ENCODE measurements at regions of chr20 and their contacts with region 1.

Region 1: GRCh38 chr20:44310664-44311639 is at the start of gene FITM2:
- DNase-seq: peak; percentile 99
- ATAC-seq: peak; percentile 88 to 96 (median 92)
- H3K4me3 ChIP-seq: peak within 1 kb of the TSS; percentile 57 to 97 (median 79)
- H3K27ac ChIP-seq: peak within 1 kb of the TSS; percentile 79 to 92 (median 86)
- H3K4me1 ChIP-seq: peaks cover 0 to 44% (median 20%) of the 10 kb centered on the region in 9 donors
- H3K27me3 ChIP-seq: no peaks in the 10 kb centered on the region
- CTCF ChIP-seq: peak; percentile 92 to 99 (median 97)
- total RNA-seq, gene FITM2: 94.4 to 182 (median 140) TPM

Region 2: GRCh38 chr20:44109951-44110361 is 201.0 kb before region 1 on chr20:
- intact Hi-C with region 1: loop called in 1 of 10 experiments (anchors 10 kb)
- DNase-seq: no peak
- ATAC-seq: peak in 5 of 8 donors; percentile 3 to 20 (median 12)
- H3K4me3 ChIP-seq: no peak overlapping the region
- H3K27ac ChIP-seq: no peak overlapping the region
- H3K4me1 ChIP-seq: peaks cover 0 to 44% (median 0%) of the 10 kb centered on the region in 9 donors
- H3K27me3 ChIP-seq: peaks cover 0 to 12% (median 0%) of the 10 kb centered on the region in 7 donors
- CTCF ChIP-seq: peak in 7 of 9 donors; percentile 7 to 38 (median 22)

Region 3: DNA sequence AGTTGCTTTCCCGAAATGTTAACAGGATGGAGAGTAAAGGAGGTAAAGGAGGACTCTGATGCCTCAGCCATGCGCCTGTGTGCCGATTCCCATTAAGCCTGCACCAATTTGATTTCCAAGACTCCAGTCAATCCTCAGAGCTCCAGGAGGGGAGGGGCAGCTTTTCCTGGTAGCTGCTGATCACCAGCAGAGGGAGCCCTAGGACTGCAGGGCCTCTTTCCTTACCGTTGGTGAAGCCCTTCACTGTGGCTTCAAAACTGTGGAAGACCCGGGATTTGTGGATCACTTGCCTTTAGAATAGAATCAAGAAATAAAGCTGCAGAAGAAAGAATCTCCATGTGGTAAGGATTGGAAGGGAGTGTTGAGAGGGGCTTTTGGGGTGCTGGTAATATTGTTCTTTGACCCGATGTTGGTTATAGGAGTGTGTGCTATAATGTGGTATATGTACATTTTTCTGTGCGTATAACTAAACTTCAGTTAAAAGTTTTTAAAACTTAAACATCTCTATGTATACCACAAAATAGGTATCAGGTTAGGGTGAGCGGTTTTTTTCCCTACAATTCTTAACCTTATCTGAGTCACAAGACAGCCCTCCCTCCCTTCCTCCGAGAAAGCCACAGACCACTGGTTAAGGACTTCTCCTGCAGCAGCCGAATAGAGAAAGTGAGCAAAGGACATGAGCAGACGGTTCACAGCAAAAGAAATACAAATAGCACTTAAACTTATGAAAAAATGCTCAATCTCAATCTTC is 93.4 kb before region 1 on chr20:
- intact Hi-C with region 1: loop called (anchors 1 to 5 kb)
- DNase-seq: peak; percentile 52 to 69
- ATAC-seq: peak; percentile 66 to 84 (median 78)
- H3K4me3 ChIP-seq: peak overlapping the region in 8 of 10 donors; percentile 2 to 43 (median 27)
- H3K27ac ChIP-seq: peak overlapping the region in 8 of 10 donors; percentile 1 to 72 (median 48)
- H3K4me1 ChIP-seq: peaks cover 0 to 35% (median 18%) of the 10 kb centered on the region in 9 donors
- H3K27me3 ChIP-seq: no peaks in the 10 kb centered on the region
- CTCF ChIP-seq: peak; percentile 63 to 95 (median 84)

Region 4: DNA sequence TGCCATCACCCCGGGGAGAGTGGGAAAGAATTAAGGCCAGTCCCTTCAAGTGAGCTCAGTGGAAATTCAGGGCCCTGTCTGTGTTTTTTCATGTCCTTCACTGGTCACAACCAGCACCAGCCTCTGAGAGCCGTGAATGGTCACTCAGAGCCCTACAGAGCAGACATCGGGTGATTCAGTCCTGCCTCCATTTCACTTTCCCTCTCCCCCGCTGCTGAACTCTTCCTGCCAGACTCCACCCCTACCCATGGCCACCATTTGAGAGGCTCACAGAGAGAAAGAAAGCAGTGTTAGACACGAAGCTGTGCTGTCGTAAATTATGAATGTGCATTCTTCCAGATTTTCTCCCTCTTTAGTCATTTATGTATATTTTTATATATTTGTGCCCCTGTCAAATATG is 31.3 kb after region 1 on chr20:
- intact Hi-C with region 1: no loop called
- DNase-seq: no peak
- ATAC-seq: peak in 3 of 8 donors; percentile 19 to 55 (median 48)
- H3K4me3 ChIP-seq: no peak overlapping the region
- H3K27ac ChIP-seq: no peak overlapping the region
- H3K4me1 ChIP-seq: no peaks in the 10 kb centered on the region
- H3K27me3 ChIP-seq: peaks cover 0 to 11% (median under 1%) of the 10 kb centered on the region in 7 donors
- CTCF ChIP-seq: no peak

Region 5: DNA sequence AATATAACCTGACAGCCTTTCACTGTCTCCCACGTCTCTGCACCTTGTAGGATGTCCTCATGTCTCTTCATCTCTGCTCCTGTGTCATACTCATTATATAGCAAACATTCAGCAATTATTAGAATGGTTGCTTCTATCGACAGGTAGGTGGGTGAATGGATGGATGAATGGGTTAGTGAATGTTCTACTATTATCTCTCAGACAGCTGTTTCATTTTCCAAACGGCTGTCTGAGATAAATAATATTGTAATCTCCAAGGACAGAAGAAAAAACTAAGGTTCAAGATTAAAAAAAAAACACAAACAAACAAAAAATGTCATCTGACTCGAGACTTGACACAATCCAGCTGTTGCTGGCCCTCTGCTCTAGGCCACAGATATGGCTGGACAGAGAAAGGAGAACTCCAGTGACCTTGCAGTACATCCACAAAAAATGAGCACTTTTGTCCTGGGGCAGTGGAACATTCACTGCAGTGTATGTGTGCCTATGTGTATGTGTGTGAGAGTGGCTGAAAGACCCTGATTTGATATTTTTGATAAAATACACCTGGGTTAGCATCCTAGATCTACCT is 46.7 kb after region 1 on chr20:
- intact Hi-C with region 1: no loop called
- DNase-seq: peak in 1 of 2 donors; percentile 48
- ATAC-seq: peak in 7 of 8 donors; percentile 28 to 89 (median 78)
- H3K4me3 ChIP-seq: no peak overlapping the region
- H3K27ac ChIP-seq: peak overlapping the region in 1 of 10 donors; percentile 14
- H3K4me1 ChIP-seq: peaks cover 0 to 12% (median 0%) of the 10 kb centered on the region in 9 donors
- H3K27me3 ChIP-seq: peaks cover 0 to 23% (median 0%) of the 10 kb centered on the region in 7 donors
- CTCF ChIP-seq: no peak

Region 6: DNA sequence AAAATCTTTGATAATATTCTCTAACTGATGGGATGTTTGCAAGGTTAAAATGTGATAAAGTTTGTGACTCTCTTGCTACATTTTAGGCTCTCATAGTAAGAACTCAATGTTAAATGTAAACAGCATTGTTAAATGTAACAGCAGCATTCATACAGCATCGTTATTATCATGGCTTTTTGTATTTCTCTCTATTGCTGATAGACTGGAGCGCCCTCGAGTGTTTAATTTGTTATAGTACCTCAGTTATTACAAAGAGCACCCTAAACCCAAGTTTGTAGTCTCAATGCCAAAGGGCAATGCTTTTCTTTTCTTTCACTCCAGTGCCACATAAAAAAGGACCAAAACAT is 149.8 kb after region 1 on chr20:
- intact Hi-C with region 1: loop called in 1 of 10 experiments (anchors 10 kb)
- DNase-seq: no peak
- ATAC-seq: peak in 1 of 8 donors; percentile 42
- H3K4me3 ChIP-seq: no peak overlapping the region
- H3K27ac ChIP-seq: no peak overlapping the region
- H3K4me1 ChIP-seq: no peaks in the 10 kb centered on the region
- H3K27me3 ChIP-seq: no peaks in the 10 kb centered on the region
- CTCF ChIP-seq: peak in 8 of 9 donors; percentile 7 to 60 (median 42)

Region 7: DNA sequence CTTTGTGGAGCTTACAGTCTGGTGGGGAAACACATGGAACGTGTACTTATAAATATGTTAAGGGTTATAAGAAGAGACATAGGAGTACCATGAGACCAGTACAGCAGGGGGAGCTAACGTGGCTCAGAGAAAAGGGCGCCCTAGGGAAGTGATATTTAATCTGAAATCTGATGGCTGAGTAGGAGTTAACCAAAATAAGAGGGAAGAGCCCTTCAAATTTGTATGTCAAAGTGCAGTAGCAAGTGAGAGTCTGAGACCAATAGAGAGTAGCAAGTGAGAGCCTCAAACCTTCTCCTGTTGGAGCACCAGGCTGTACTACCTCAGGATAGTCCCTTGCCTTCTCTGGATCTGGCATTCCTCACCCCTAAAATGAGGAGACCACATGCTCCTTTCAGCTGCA is 265.3 kb after region 1 on chr20:
- intact Hi-C with region 1: no loop called
- DNase-seq: peak in 1 of 2 donors; percentile 52
- ATAC-seq: peak in 5 of 8 donors; percentile 11 to 47 (median 39)
- H3K4me3 ChIP-seq: no peak overlapping the region
- H3K27ac ChIP-seq: peak overlapping the region; percentile 43 to 98 (median 64)
- H3K4me1 ChIP-seq: peaks cover 10 to 90% (median 67%) of the 10 kb centered on the region in 9 donors
- H3K27me3 ChIP-seq: no peaks in the 10 kb centered on the region
- CTCF ChIP-seq: peak; percentile 13 to 71 (median 53)

Region 8: DNA sequence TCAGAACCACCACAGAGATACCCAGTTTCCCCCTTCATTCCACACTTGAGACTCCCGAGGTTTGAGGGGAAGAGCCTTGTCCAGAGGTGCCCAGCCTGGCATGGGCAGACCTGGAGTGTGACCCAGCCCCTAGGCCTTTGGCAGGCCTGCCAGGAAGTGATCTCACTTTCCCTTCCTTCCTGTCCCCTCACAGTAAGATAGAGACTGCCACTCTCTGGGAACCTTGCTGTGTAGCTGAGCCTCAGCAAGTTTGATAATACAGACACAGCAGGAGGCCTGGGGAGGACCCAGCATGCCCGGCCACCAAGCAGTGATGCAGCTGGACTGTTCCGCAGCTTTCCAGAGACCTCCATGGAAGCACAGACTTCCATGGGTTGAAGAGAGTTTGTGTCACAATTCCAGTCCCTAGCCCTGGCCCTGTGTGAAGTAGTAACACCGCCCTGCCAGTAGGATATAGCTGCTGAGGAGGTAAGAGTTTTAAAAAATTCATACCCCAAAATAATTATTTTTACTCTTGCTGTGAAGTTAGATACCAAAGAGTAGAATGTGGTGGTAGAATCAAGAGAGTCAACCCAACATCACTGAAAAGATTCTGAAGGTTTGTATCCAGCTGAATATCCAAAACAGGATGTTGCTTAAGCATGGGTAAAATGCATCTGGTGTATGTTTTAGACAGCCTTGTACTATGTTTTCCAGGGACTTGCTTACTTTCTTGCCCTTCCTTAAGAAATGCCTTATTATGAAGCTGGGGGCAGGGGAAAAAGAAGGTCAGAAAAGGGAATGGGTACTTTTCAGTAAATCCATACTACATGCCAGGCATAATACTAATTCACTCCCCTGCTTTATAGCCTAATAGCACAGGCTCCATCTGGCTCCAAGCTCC is 287.7 kb after region 1 on chr20:
- intact Hi-C with region 1: loop called in 1 of 10 experiments (anchors 5 kb)
- DNase-seq: peak; percentile 64 to 83
- ATAC-seq: peak; percentile 59 to 77 (median 71)
- H3K4me3 ChIP-seq: peak overlapping the region in 8 of 10 donors; percentile 12 to 49 (median 36)
- H3K27ac ChIP-seq: peak overlapping the region; percentile 55 to 98 (median 92)
- H3K4me1 ChIP-seq: peaks cover 45 to 100% (median 99%) of the 10 kb centered on the region in 9 donors
- H3K27me3 ChIP-seq: no peaks in the 10 kb centered on the region
- CTCF ChIP-seq: peak in 4 of 9 donors; percentile 21 to 38 (median 30)

Measured in heart right ventricle (tissue), 16 donors.